Activated B cell treated with CpG ODN at 0.5 μM for 24 hours (primary cell): ENCODE measurements at regions of chr15 and their contacts with region 1.

Region 1: GRCh38 chr15:75928680-75929608 is 25.3 kb downstream of the FBXO22 start:
- DNase-seq: no peak
- ATAC-seq: no peak
- H3K4me3 Mint-ChIP-seq: no peak overlapping the region
- H3K27ac Mint-ChIP-seq: no peak overlapping the region
- H3K4me1 Mint-ChIP-seq: peaks cover 36% of the 10 kb centered on the region
- H3K27me3 Mint-ChIP-seq: no peaks in the 10 kb centered on the region
- CTCF ChIP-seq: no peak

Region 2: DNA sequence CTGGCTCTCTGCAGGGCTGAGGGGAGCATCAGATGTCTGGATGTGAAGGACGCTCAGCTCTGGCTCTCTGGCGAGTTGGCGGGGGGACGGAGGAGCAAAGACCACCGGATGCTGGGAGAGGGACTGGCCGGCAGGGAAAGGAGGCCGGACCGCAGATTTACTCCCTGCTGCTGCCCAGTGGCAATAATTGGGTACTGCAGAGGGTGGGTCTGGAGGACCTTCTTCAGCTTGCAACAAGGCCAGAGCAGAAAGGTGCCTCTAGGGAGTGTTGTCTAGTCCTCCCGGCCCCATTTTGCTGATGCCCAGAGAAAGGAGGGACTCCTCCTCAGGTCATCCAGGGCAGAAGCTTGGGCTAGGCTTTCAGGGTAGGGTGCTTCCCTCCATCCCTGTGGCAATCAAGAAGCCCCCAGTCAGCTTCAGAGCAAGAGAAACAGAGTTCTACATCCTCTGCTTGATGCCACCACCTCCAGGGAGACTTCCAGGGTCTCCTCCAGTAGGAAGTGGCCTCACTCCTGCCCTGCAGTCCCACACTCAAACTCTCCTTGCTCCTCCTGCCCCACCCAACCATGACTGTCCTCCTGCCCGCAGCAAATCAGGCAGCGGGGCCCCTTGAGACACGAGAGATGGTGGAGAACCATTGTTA is 196.0 kb before region 1 on chr15:
- CTCF ChIA-PET with region 1: no interaction called
- POLR2A ChIA-PET with region 1: no interaction called
- intact Hi-C with region 1: loop called (anchors 5 kb)
- DNase-seq: peak; percentile 48
- ATAC-seq: peak; percentile 78
- H3K4me3 Mint-ChIP-seq: no peak overlapping the region
- H3K27ac Mint-ChIP-seq: no peak overlapping the region
- H3K4me1 Mint-ChIP-seq: peaks cover 19% of the 10 kb centered on the region
- H3K27me3 Mint-ChIP-seq: peaks cover 9% of the 10 kb centered on the region
- CTCF ChIP-seq: no peak

Region 3: DNA sequence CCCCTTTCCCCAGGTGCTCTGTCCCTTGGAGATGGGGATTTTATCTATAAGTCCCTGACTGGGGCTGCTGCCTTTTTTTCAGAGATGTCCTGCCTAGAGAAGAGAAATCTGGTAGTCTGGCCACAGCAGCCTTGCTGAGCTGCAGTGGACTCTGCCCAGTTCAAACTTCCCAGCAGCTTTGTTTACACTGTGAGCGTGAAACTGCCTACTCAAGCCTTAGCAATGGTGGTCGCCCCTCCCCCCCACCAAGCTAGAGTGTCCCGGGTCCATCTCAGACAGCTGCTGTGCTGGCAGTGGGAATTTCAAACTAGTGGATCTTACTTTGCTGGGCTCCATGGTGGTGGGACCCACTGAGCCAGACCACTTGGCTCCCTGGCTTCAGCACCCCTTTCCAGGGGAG is 169.7 kb after region 1 on chr15:
- CTCF ChIA-PET with region 1: no interaction called
- POLR2A ChIA-PET with region 1: no interaction called
- intact Hi-C with region 1: no loop called
- DNase-seq: no peak
- ATAC-seq: no peak
- H3K4me3 Mint-ChIP-seq: no peak overlapping the region
- H3K27ac Mint-ChIP-seq: no peak overlapping the region
- H3K4me1 Mint-ChIP-seq: no peaks in the 10 kb centered on the region
- H3K27me3 Mint-ChIP-seq: peaks cover 46% of the 10 kb centered on the region
- CTCF ChIP-seq: no peak